Right lobe of liver (tissue), 6 donors: ENCODE measurements at regions of chr7 and their contacts with region 1.

Region 1: GRCh38 chr7:24819916-24820689 is 62.8 kb upstream of the GSDME start:
- DNase-seq: peak; percentile 69 to 78 (median 77)
- ATAC-seq: peak; percentile 93 to 98 (median 97)
- H3K4me3 ChIP-seq: no peak overlapping the region
- H3K27ac ChIP-seq: peak overlapping the region in 1 of 3 donors; percentile 19
- H3K4me1 ChIP-seq: peaks cover 0 to 4% (median 0%) of the 10 kb centered on the region in 4 donors
- H3K27me3 ChIP-seq: no peaks in the 10 kb centered on the region
- CTCF ChIP-seq: peak; percentile 88 to 91 (median 89)
- POLR2A ChIP-seq: no peak

Region 2: DNA sequence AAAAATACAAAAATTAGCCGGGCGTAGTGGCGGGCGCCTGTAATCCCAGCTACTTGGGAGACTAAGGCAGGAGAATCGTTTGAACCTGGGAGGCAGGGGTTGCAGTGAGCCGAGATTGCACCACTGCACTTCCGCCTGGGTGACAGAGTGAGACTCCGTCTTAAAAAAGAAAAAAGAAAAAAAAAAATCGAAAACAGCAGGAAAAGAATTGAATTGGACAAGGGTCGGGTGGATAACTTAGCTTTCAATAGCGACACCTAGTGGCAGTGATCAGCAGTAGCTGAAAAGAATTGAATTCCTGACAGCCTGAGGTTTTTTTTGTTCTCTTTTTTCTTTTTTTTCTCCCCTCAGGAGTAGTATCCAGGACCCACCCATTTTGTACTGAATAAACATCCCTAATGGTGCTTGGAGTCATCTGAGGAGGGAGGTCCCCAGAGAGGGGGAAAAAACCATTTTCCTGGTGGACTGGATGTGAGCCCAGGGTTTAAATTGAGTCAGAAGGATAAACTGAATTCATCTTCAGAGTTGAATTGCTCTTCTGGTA is 249.9 kb after region 1 on chr7:
- intact Hi-C with region 1: loop called in 1 of 2 experiments (anchors 10 kb)
- DNase-seq: peak in 2 of 3 donors; percentile 33 to 52
- ATAC-seq: peak; percentile 82 to 95 (median 91)
- H3K4me3 ChIP-seq: peak overlapping the region; percentile 16 to 36 (median 31)
- H3K27ac ChIP-seq: peak overlapping the region in 1 of 3 donors; percentile 31
- H3K4me1 ChIP-seq: no peaks in the 10 kb centered on the region
- H3K27me3 ChIP-seq: no peaks in the 10 kb centered on the region
- CTCF ChIP-seq: peak; percentile 81 to 90 (median 86)
- POLR2A ChIP-seq: no peak